ENCODE measurements at regions of chr7 and their contacts with region 1.

Region 1: DNA sequence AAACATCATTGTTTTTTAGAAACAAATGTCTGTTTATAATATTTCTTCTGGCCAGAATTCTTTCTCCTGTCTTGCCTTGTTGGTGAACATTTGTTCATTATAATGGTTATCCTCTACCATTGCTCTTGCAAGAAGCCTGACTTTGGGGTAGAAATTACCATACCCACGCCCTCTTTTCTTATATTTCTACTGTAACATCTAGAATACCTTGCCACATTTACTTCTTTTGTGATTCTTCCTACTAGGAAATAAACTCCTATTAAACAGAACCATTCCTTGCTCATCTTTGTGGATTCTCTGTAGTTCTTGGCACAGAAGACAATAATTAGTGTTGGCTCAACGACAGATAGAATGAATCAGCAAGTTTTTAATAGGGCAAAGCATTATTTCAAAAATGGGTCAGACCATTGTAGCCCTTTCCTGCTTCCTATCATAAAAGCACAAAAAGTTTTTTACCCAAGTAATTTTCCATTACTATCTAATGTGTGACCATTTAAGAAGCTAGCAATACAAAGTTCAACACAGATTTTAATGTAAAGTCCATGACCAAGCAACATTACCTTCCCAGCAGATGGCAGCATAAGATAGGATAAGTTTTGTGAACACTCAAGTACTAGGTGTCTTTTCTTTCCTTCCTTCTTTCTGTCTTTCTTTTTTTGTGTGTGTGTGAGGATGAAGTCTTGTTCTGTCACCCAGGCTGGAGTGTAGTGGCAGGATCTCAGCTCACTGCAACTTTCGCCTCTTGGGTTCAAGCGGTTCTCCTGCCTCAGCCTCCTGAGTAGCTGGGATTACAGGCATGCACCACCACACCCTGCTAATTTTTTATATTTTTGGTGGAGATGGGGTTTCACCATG is 270.4 kb downstream of the HGF start:
- DNase-seq: no peak
- ATAC-seq: peak; percentile 82 to 92

Region 2: DNA sequence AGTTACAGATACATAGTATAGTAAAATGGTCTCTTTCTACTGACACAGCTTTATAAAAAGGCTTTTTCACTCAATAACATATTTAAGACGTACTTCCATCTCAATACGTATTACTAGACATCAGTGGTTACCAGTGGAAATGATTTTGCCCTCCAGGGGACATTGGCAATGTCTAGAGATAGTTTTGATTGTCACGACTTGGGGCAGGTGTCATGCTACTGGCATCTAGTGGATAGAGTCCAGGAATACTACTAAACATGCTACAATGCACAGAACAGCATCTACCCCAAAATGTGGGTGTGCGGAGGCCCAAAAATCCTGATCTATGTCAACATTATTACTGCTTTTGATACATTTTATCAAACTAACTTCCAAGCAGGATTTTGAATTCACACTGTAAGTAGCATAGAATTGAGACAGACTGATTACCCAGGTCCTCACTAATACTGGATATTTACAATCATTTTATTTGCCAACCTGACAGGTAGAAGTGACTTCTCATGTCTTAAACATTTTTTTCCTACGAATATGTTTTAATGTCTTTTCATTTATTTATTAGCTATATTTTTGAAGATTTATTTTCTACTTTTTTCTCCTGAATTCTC is 216.6 kb after region 1 on chr7:
- intact Hi-C with region 1: loop called in 1 of 2 experiments (anchors 10 kb)
- DNase-seq: no peak
- ATAC-seq: no peak

Region 3: DNA sequence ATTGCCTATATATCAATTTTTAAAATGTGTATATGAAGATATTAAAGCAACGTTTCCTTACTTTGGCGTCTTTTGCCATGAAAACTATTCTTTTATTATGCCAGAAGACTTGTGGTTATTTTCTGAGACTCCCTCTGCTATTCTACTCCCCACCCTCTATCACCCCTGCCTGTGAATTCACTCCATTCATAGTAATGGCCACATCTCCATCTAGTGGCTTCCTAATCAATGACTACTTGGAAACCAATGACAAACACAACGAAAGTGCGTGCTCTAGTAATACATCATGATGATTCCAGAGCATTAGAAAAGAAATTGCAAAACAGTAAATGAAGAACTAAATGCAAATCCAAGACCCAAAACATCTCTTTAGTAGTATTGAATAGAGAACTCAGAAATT is 457.0 kb after region 1 on chr7:
- intact Hi-C with region 1: loop called (anchors 2 to 10 kb)
- DNase-seq: no peak
- ATAC-seq: peak; percentile 66 to 88

Region 4: DNA sequence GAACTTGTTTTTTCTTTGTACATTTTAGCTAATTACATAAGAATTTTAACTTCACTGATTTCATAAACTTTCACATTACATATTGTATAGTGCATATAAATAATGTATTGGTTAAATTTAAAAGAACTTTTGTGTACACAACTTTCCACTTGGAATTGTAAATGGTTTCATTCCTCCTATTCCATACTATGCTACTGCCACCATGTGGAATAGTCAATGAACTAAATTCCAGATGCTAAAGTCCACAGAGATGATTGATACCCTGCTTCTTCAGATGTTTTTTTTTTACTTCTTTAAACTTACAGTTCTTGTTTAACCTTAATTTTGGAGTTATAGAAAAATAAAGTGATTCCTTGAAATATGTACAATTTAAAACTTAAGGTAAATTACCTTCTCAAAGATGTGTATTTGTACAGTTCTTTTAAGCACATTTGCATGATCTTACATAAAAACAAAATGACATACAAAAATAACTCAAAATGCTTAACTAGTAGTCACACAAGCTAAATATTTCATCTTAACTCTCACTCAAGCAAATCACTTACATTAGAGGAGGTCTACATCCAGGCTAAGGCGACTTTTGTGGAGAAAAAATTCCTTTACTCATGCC is 518.0 kb after region 1 on chr7:
- intact Hi-C with region 1: loop called in 1 of 2 experiments (anchors 5 kb)
- DNase-seq: no peak
- ATAC-seq: no peak

Region 5: DNA sequence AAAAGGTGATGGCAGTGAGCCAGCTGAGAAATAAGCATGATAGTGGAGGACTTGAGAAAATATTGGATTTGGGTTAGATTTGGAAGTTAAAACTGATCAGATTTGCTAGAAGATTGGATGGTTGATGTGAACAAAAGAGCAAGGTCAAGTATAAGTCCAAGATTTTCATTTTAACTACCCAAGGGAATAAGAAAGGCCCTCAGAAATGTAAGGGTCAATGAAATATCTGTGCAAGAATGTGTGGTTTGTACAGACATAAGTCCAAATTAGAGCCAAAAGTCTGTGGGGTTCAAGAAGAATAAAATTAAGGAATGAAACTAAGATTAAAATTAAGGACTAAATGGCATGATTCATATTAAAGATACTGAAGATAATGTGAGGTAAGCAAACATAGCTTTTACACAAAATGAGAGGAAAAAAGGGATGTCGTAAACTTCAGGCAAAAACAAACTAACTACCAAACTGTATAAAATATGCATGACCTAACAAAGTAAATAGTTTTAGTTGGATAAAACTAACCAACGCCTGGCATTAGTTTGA is 1022.5 kb after region 1 on chr7:
- intact Hi-C with region 1: no loop called
- DNase-seq: no peak
- ATAC-seq: no peak

Region 6: DNA sequence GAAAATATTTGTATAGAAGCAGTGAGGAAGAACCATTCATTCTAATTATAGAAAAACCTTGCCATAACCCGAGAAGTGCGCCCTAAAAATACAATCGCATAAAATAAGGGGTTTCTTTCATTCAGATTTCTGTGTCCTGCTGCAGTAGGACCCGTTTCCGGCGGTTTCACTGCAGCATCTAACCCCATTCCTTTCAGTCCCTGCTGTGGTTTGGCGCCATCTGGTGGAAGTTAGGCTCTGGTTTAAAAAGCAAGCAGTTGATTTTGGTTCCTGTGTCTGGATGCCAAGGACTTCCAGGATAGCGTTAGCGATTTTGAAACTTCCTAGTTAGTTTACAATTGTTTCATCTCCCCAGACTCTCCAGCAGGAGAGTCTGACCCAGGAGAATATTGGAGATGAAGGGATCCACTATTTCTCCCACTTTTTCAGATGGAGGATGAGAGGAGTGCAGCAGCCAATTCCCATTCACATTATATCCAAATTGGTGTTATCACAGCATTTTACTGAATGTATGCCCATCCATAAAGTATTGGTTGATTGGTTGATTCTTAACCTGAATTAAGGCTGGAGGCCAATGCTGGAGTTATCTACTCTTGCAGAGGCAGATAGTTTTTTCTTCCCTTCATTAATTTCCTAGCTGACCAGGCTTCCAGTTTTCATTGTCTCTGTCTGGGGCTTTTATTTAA is 1072.8 kb after region 1 on chr7:
- intact Hi-C with region 1: loop called in 1 of 2 experiments (anchors 10 kb)
- DNase-seq: peak; percentile 90
- ATAC-seq: peak; percentile 88 to 96

Region 7: GRCh38 chr7:82729172-82730030 is 1229.9 kb after region 1 on chr7:
- intact Hi-C with region 1: loop called in 1 of 2 experiments (anchors 10 kb)
- DNase-seq: no peak
- ATAC-seq: no peak